AG04449 (cell line): ENCODE measurements at regions of chr12 and their contacts with region 1.

Region 1: DNA sequence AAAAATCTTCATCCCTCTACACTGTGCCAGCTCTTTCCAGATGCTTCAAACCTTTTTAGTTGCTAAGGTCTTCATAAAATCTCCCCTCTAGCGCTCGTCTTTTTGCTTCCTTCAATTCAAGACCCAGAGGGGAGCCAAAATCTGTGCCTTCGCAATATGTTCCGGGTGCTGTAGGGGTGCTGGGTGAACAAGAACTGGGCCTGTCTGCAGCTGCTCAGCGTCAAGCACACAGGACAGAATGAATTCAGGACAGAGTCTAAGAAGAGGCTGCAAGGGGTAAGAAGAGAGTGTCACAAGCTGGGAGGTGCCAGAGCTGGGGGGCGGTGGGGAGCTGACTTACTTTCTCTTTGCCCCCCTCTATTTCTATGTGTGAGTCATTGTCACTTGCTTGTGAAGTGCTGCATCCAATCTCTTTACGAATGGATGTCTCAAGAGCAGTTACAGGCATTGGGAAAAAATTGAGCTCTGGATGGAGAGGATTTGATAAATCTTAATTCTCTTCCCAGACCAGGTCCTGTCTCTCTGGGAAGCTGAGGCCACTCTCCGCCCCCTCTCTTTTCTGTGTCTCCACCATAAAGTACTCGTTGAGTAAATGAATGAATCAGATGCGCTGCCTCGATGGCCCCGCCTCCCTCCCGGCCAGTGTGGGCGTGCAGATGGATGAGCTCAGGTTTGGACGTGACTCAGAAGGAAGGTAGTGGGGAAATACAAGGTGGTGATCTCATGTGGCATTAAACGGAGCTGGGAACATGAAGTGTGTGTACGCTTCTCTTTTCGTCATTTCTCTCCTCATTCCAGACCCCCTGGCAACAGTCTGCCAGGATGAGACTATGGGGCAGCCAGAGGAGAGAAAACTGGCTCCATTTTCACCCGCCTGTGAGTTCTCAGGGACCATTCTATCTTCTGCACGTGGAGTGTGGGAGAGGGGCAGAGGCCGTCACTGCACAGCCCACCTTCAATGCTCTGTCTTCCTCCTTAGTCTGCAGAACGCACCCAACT is 91.3 kb downstream of the TSPAN9 start:
- DNase-seq: peak; percentile 79
- H3K4me3 ChIP-seq: no peak overlapping the region; the same call in 1 of the 2 replicates
- CTCF ChIP-seq: no peak

Region 2: DNA sequence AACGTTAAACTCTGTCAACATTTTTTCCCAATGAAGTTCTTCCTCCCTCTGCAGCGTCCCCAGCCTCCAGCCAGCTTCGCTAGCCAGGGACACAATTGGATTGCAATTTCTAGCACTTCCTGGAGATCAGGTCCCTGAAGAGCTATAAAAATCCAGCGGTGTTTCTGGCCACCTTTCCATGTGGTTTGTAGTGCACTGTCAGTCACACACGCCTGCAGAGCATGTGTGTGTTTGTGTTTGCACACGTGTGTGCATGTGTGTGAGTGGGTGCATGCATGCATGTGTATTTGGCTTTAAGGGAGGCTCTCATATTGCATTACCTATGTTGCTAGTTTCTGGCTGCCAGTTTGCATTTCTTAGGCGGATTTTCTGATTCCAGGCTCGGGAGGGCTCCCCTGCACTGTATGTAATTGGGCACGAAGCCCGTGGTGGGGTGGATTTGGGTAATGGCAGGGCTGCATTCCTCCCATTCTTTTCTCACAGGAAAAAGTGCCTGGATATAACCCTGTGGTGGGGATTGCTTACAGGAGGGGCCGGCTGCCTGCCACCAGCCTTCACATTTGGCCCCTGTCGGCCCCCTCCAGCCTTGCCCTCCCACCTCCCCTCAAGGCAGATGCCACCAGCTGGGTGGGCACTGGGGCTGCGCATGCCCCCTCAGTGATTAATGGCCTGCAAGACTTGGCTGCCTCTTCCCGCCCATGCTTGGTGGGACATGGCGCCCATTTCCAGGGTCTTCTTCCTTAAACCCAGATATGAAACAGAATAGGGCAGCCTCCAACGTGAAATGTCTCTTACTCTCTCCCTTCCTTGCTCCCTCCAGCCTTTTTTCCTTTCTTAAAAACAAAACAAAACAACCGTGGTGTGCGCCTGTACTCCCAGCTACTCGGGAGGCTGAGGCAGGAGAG is 17.3 kb before region 1 on chr12:
- CTCF ChIA-PET with region 1: interaction called, 13 read pairs
- POLR2A ChIA-PET with region 1: no interaction called
- DNase-seq: no peak
- H3K4me3 ChIP-seq: no peak overlapping the region
- CTCF ChIP-seq: no peak

Region 3: GRCh38 chr12:3222979-3223378 is 54.5 kb after region 1 on chr12:
- CTCF ChIA-PET with region 1: no interaction called
- POLR2A ChIA-PET with region 1: no interaction called
- DNase-seq: no peak
- H3K4me3 ChIP-seq: no peak overlapping the region
- CTCF ChIP-seq: no peak